Endothelial cell of umbilical vein (primary cell): ENCODE measurements at regions of chr15 and their contacts with region 1.

Region 1: GRCh38 chr15:96356494-96357455 is 26.3 kb downstream of the NR2F2 start:
- DNase-seq: peak; percentile 88
- H3K4me3 ChIP-seq: peak overlapping the region; percentile 46 to 81 (median 65)
- H3K27ac ChIP-seq: peak overlapping the region; percentile 76
- H3K4me1 ChIP-seq: peaks cover 71% of the 10 kb centered on the region
- H3K27me3 ChIP-seq: no peaks in the 10 kb centered on the region
- CTCF ChIP-seq: peak; percentile 94 to 98
- POLR2A ChIP-seq: no peak

Region 2: DNA sequence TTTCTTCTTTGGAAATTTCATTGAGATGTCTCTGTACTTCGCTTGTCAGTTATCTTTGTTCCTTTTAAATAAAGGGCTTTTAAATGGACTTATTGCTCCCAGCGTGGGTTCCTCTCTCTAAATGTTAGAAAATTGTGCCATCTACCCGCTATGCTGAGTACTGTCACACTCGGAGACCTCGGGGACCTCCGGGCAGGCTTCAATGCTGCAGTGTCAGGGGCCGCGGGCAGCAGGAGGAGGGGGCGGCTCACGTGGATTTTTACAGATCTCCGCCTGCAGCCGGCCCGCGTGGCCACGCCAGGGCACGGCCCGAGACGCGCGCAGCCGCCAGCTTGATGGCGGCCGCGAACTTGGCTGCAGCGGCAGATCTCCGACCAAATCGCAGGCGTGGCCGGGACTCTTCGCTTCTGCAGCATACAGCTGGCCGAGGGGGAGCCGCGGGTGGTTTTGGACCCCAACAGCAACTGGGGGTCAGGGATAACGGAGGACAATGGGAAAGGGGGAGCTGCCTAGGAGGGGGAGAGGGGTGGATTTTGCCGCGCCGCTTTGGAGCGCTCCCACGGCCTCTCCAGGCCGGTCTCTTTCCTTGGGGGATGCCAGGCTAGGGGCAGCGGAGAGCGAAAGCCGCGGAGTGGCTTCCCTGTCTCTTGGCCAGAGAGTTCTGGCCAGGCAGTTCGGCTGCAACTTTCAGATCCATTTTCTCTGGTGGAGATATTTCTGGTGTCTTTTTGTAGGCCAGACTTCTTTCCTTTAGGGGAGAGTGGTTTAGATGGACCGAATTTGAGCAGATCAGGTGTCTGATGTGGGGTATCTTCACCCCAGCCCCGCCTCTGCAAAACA is 11.0 kb before region 1 on chr15:
- CTCF ChIA-PET with region 1: interaction called, 22 read pairs
- POLR2A ChIA-PET with region 1: no interaction called
- dilution Hi-C with region 1: no loop called
- intact Hi-C with region 1: no loop called
- DNase-seq: peak; percentile 86
- H3K4me3 ChIP-seq: peak overlapping the region; percentile 16 to 99 (median 74)
- H3K27ac ChIP-seq: peak overlapping the region; percentile 87
- H3K4me1 ChIP-seq: peaks cover 83% of the 10 kb centered on the region
- H3K27me3 ChIP-seq: no peaks in the 10 kb centered on the region
- CTCF ChIP-seq: peak; percentile 22 to 33
- POLR2A ChIP-seq: no peak

Region 3: GRCh38 chr15:96462777-96463750 is 106.3 kb after region 1 on chr15:
- CTCF ChIA-PET with region 1: interaction called, 24 read pairs
- POLR2A ChIA-PET with region 1: no interaction called
- dilution Hi-C with region 1: no loop called
- intact Hi-C with region 1: loop called (anchors 1 kb)
- DNase-seq: peak; percentile 29
- H3K4me3 ChIP-seq: no peak overlapping the region
- H3K27ac ChIP-seq: no peak overlapping the region
- H3K4me1 ChIP-seq: no peaks in the 10 kb centered on the region
- H3K27me3 ChIP-seq: no peaks in the 10 kb centered on the region
- CTCF ChIP-seq: peak in 1 of 2 donors; percentile 18
- POLR2A ChIP-seq: no peak

Region 4: GRCh38 chr15:96893159-96893906 is 536.6 kb after region 1 on chr15:
- CTCF ChIA-PET with region 1: interaction called, 13 read pairs
- POLR2A ChIA-PET with region 1: no interaction called
- dilution Hi-C with region 1: no loop called
- intact Hi-C with region 1: loop called (anchors 1 kb)
- DNase-seq: peak; percentile 80
- H3K4me3 ChIP-seq: no peak overlapping the region
- H3K27ac ChIP-seq: no peak overlapping the region
- H3K4me1 ChIP-seq: peaks cover 4% of the 10 kb centered on the region
- H3K27me3 ChIP-seq: no peaks in the 10 kb centered on the region
- CTCF ChIP-seq: peak; percentile 62 to 70
- POLR2A ChIP-seq: no peak

Region 5: DNA sequence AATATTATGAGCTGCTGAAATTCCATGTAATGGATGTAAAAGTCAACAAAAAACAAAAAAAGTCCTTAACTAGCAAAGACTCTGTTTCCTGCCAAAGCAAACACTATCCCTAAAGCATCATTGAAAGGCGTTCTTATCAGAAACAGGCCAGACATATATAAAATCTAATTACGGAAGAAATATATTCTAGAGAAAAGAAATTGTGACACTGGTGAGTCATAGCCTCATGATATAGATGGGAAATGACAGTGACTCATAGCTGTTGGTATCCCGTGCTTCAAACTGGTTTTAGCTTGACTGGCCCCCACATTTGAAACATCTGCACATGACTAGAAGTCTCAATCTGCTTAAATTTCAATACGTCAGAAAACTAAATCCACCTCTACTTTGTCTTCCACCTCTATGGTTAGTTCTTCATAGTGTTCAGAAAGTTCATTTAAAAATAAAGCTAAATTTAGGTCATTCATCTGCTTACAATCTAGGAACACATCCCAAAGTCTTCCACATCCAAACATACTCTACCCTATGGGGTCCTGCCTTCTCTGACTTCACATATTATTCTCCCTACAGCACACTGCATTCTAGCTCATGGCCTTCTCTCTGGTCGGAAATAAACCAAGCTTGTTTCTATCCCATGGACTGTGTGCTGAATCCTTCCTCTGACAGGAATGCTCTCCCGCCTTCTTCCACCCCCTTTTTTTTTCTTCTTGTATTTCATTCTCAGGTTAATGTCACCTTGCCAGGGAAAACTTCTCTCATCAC is 1147.4 kb after region 1 on chr15:
- CTCF ChIA-PET with region 1: no interaction called
- POLR2A ChIA-PET with region 1: no interaction called
- dilution Hi-C with region 1: no loop called
- intact Hi-C with region 1: loop called (anchors 5 kb)
- DNase-seq: peak; percentile 97
- H3K4me3 ChIP-seq: no peak overlapping the region
- H3K27ac ChIP-seq: peak overlapping the region; percentile 99
- H3K4me1 ChIP-seq: peaks cover 34% of the 10 kb centered on the region
- H3K27me3 ChIP-seq: no peaks in the 10 kb centered on the region
- CTCF ChIP-seq: no peak
- POLR2A ChIP-seq: peak; percentile 71